ENCODE measurements at regions of chr11 and their contacts with region 1.

Region 1: GRCh38 chr11:94504689-94505293 is 7.5 kb upstream of the C11orf97 start:
- DNase-seq: no peak
- H3K4me3 Mint-ChIP-seq: no peak overlapping the region
- H3K27ac Mint-ChIP-seq: no peak overlapping the region
- H3K4me1 Mint-ChIP-seq: no peaks in the 10 kb centered on the region
- H3K27me3 Mint-ChIP-seq: peaks cover 3% of the 10 kb centered on the region

Region 2: GRCh38 chr11:93234602-93235207 is 1270.1 kb before region 1 on chr11:
- CTCF ChIA-PET with region 1: no interaction called
- intact Hi-C with region 1: loop called (anchors 1 kb)
- DNase-seq: peak; percentile 84
- H3K4me3 Mint-ChIP-seq: no peak overlapping the region
- H3K27ac Mint-ChIP-seq: no peak overlapping the region
- H3K4me1 Mint-ChIP-seq: no peaks in the 10 kb centered on the region
- H3K27me3 Mint-ChIP-seq: peaks cover 21% of the 10 kb centered on the region

Region 3: GRCh38 chr11:93921695-93922468 is 582.9 kb before region 1 on chr11:
- CTCF ChIA-PET with region 1: interaction called, 3 read pairs
- intact Hi-C with region 1: loop called (anchors 1 kb)
- DNase-seq: peak; percentile 45
- H3K4me3 Mint-ChIP-seq: no peak overlapping the region
- H3K27ac Mint-ChIP-seq: no peak overlapping the region
- H3K4me1 Mint-ChIP-seq: no peaks in the 10 kb centered on the region
- H3K27me3 Mint-ChIP-seq: peaks cover 39% of the 10 kb centered on the region

Region 4: GRCh38 chr11:94325681-94326080 is 179.1 kb before region 1 on chr11:
- CTCF ChIA-PET with region 1: interaction called, 4 read pairs
- intact Hi-C with region 1: loop called (anchors 1 kb)
- DNase-seq: peak; percentile 64
- H3K4me3 Mint-ChIP-seq: no peak overlapping the region
- H3K27ac Mint-ChIP-seq: no peak overlapping the region
- H3K4me1 Mint-ChIP-seq: no peaks in the 10 kb centered on the region
- H3K27me3 Mint-ChIP-seq: peaks cover 4% of the 10 kb centered on the region

Region 5: DNA sequence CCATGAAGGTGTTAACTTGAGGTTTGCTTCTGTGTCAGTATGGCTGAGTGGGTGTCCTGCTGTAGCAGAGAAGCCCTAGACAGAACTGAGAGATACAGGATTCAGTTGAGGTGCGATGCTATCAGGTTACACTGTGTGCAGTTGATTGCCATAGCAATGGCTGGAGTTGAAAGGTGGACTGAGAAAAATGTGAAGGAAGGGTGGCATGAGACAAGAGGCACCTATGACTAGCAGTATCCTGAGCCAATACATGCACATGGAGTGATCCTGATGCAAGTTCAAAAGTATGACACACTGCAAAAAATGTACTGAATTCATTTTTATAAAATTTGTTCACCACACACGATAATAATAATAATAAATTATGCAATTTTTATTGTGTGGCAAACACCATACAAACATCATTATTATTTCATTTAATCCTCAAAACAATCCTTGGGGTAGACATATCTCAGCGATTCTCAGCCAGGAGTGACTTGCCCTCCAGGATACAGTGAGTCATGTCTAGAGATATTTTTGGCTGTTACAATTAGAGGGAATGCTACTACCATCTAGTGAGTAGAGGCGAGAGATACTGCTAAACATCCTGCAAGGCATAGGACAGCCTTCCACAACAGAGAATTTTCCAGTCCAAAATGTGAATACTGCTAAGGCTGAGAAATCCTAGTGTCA is 58.5 kb after region 1 on chr11:
- CTCF ChIA-PET with region 1: no interaction called
- intact Hi-C with region 1: no loop called
- DNase-seq: no peak
- H3K4me3 Mint-ChIP-seq: no peak overlapping the region
- H3K27ac Mint-ChIP-seq: no peak overlapping the region
- H3K4me1 Mint-ChIP-seq: no peaks in the 10 kb centered on the region
- H3K27me3 Mint-ChIP-seq: no peaks in the 10 kb centered on the region